GM10248 (cell line): ENCODE measurements at regions of chr3 and their contacts with region 1.

Region 1: GRCh38 chr3:43503067-43503728 is 118.6 kb downstream of the ANO10 start:
- DNase-seq: no peak
- CTCF ChIP-seq: peak; percentile 30

Region 2: DNA sequence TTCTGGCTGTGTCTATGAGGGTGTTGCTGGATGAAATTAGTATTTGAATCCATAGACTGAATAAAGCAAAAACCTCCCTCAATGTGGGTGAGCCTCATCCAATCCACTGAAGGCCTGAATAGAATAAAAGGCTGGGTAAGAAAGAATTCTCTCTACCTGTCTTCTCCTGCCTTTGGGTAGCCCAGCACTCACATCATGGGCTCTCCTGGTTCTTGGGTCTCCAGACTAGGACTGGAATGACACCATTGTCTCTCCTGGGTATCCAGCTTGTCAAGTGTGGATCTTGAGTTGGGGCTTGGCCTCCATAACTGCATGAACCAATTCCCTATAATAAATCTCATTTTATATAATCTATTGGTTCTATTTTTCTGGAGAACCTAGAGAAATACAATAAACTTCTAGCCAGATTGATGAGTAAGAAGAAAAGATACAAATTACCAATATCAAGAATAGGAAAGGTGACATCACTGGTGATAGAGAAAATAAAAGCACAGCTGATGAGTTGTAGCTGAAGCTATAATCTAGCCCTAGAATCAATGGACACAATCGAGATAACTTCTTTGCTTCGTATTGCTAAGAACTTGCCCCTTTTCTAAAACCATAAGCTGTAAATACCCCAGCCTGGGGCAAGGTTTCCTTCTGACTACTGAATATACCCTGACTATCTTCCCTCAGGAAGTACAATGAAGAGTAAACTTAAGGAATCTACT is 12.2 kb after region 1 on chr3:
- CTCF ChIA-PET with region 1: interaction called, 14 read pairs
- POLR2A ChIA-PET with region 1: no interaction called
- DNase-seq: no peak
- CTCF ChIP-seq: no peak